ENCODE measurements at regions of chr1 and their contacts with region 1.

Region 1: DNA sequence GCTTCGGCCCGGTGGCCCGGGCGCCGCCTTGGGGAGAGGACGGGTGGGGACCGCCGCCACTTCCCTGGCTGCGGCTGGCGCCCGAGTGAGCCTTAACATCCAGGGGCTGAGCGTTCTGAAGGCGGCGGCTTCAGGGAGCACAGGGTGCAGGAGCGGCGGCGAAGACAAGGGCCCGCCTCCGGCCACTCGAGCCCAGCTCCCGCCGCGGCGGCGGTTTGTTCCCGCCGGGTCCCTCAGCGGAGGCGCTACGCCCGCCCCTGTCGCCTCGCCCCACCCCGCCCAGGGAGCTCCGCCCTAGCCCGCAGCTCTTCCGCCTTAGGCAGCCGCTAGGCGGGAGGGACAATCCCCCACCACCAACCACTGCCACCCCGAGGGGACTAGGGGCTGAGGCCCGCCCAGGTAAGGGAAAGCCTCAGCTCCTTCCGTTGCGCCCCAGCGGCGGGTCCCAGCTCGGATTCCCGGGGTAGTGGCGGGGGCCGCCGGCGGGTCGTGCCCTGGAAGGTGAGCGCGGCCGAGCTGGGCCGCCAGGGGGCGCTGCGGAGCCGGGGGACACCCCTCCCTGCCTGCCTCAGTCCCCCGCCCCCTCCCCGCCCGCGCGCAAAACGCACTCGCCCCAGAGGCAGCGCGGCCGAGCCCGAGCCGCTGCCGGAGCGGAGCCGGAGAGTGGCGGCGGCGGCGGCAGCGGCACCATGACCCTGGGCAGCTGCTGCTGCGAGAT is at the start of gene FOXD2:
- DNase-seq: peak; percentile 59
- ATAC-seq: peak; percentile 84
- H3K4me3 ChIP-seq: peak within 1 kb of the TSS; percentile 88
- H3K27ac ChIP-seq: peak within 1 kb of the TSS; percentile 64
- H3K4me1 ChIP-seq: peaks cover 8% of the 10 kb centered on the region
- H3K27me3 ChIP-seq: peaks cover 12 to 14% of the 10 kb centered on the region in 2 experiments
- CTCF ChIP-seq: peak; percentile 70 to 81 (median 75)
- EP300 ChIP-seq: no peak
- POLR2A ChIP-seq: peak; percentile 70
- RAD21 ChIP-seq: peak; percentile 21; the same call in 1 of the 2 replicates
- polyA plus RNA-seq, gene FOXD2: 0.04 TPM in 1 of 2 experiments, not detected in the other

Region 2: DNA sequence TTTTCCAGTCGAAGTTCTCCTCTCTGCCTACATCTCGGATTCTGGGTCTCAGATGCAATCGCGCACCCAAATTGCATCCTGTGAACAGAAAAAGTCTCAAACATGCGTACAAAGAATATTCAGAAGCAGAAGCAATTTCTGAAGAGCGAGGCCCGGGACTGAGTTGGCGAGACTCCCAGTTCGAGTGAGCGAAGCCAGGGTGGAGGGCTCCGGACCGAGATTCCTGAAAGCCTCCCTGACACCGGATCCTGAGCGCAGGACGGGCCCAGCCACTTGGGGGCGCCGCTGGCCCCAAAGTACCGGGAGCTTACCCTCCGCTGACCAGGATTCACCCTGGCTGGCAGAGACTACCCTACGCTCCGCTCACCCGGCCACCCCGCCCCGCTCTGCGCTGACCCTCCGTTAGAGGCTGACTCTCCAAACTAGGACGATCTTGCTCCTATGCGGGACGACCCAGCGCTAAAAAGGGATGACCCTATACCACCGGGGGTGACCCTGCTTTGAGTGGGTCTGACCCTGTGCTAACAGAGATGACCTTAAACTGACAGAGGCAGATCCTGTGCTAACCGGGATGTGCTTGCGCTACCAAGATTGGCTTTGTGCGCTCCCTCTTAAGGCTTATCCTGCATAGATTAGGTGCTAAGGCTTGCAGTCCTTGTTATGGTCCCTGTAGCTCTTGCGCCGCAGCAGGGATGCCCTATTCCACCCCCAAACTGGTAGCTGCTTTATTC is 12.4 kb after region 1 on chr1:
- CTCF ChIA-PET with region 1: interaction called, 13 read pairs
- POLR2A ChIA-PET with region 1: no interaction called
- RAD21 ChIA-PET with region 1: interaction called, 4 read pairs
- SMC1A ChIA-PET with region 1: interaction called, 5 read pairs
- in situ Hi-C with region 1: no loop called
- intact Hi-C with region 1: no loop called
- DNase-seq: no peak
- ATAC-seq: no peak
- H3K4me3 ChIP-seq: no peak overlapping the region
- H3K27ac ChIP-seq: no peak overlapping the region
- H3K4me1 ChIP-seq: no peaks in the 10 kb centered on the region; the same call in 1 of the 2 replicates
- H3K27me3 ChIP-seq: peaks cover 17 to 21% of the 10 kb centered on the region in 2 experiments
- CTCF ChIP-seq: peak; percentile 27 to 38 (median 32); a peak in 2 of 6 replicates
- EP300 ChIP-seq: no peak
- POLR2A ChIP-seq: no peak
- RAD21 ChIP-seq: peak; percentile 8; the same call in 1 of the 2 replicates

Region 3: GRCh38 chr1:47717341-47717740 is 279.7 kb after region 1 on chr1:
- CTCF ChIA-PET with region 1: interaction called, 12 read pairs
- POLR2A ChIA-PET with region 1: no interaction called
- RAD21 ChIA-PET with region 1: no interaction called
- SMC1A ChIA-PET with region 1: interaction called, 10 read pairs
- in situ Hi-C with region 1: loop called (anchors 5 kb)
- intact Hi-C with region 1: no loop called
- DNase-seq: no peak
- ATAC-seq: no peak
- H3K4me3 ChIP-seq: no peak overlapping the region
- H3K27ac ChIP-seq: no peak overlapping the region
- H3K4me1 ChIP-seq: no peaks in the 10 kb centered on the region
- H3K27me3 ChIP-seq: peaks cover 0 to 4% of the 10 kb centered on the region in 2 experiments; a peak in 2 of 4 replicates
- CTCF ChIP-seq: no peak
- EP300 ChIP-seq: no peak
- POLR2A ChIP-seq: no peak
- RAD21 ChIP-seq: no peak

Measured in GM12878 (cell line).